ENCODE measurements at regions of chr10 and their contacts with region 1.

Region 1: GRCh38 chr10:60114765-60115586 is 208.6 kb upstream of the CCDC6 start:
- DNase-seq: peak; percentile 8
- H3K4me3 Mint-ChIP-seq: no peak overlapping the region
- H3K27ac Mint-ChIP-seq: no peak overlapping the region
- H3K4me1 Mint-ChIP-seq: no peaks in the 10 kb centered on the region
- H3K27me3 Mint-ChIP-seq: no peaks in the 10 kb centered on the region

Region 2: GRCh38 chr10:60093317-60093716 is 21.7 kb before region 1 on chr10:
- CTCF ChIA-PET with region 1: no interaction called
- intact Hi-C with region 1: no loop called
- DNase-seq: no peak
- H3K4me3 Mint-ChIP-seq: no peak overlapping the region
- H3K27ac Mint-ChIP-seq: no peak overlapping the region
- H3K4me1 Mint-ChIP-seq: no peaks in the 10 kb centered on the region
- H3K27me3 Mint-ChIP-seq: no peaks in the 10 kb centered on the region

Region 3: GRCh38 chr10:60208676-60209269 is 93.8 kb after region 1 on chr10:
- CTCF ChIA-PET with region 1: interaction called, 6 read pairs
- intact Hi-C with region 1: loop called (anchors 1 kb)
- DNase-seq: no peak
- H3K4me3 Mint-ChIP-seq: no peak overlapping the region
- H3K27ac Mint-ChIP-seq: no peak overlapping the region
- H3K4me1 Mint-ChIP-seq: peaks cover 17% of the 10 kb centered on the region
- H3K27me3 Mint-ChIP-seq: no peaks in the 10 kb centered on the region